PC-9 (cell line): ENCODE measurements at regions of chr4 and their contacts with region 1.

Region 1: GRCh38 chr4:118740869-118741268 is 55.7 kb downstream of the METTL14 start:
- DNase-seq: no peak
- H3K4me3 ChIP-seq: no peak overlapping the region
- H3K27ac ChIP-seq: no peak overlapping the region
- H3K4me1 ChIP-seq: no peaks in the 10 kb centered on the region
- H3K27me3 ChIP-seq: no peaks in the 10 kb centered on the region
- CTCF ChIP-seq: peak; percentile 63

Region 2: GRCh38 chr4:118765399-118765798 is 24.5 kb after region 1 on chr4:
- CTCF ChIA-PET with region 1: interaction called, 14 read pairs
- POLR2A ChIA-PET with region 1: no interaction called
- intact Hi-C with region 1: no loop called
- DNase-seq: peak in 1 of 2 experiments; percentile 52
- H3K4me3 ChIP-seq: no peak overlapping the region
- H3K27ac ChIP-seq: 0 out of 2 replicates have a peak overlapping the region, but pooled peaks have one; percentile 1
- H3K4me1 ChIP-seq: 0 out of 2 replicates have a peak, but pooled peaks cover 4% of the 10 kb centered on the region
- H3K27me3 ChIP-seq: no peaks in the 10 kb centered on the region
- CTCF ChIP-seq: no peak

Region 3: DNA sequence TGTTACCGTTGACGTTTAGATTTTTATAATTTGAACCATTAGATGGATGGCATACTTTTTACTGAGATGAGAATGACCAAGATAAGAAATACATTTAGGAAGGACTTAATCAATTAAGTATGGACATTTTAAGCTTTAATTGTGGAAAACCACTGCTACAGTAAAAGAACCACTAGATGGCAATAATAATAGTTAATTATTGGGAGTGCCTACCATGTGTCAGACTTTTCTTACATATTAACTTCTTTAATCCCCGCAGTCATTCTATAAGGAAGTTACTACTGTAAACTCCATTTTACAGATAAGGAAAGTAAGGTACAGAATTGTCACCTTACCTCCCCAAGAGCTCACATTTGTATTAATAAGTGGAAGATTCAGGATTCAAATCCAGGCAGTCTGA is 346.3 kb after region 1 on chr4:
- CTCF ChIA-PET with region 1: no interaction called
- POLR2A ChIA-PET with region 1: no interaction called
- intact Hi-C with region 1: no loop called
- DNase-seq: no peak
- H3K4me3 ChIP-seq: no peak overlapping the region
- H3K27ac ChIP-seq: no peak overlapping the region
- H3K4me1 ChIP-seq: no peaks in the 10 kb centered on the region
- H3K27me3 ChIP-seq: no peaks in the 10 kb centered on the region
- CTCF ChIP-seq: peak; percentile 21; the same call in 1 of the 2 replicates

Region 4: DNA sequence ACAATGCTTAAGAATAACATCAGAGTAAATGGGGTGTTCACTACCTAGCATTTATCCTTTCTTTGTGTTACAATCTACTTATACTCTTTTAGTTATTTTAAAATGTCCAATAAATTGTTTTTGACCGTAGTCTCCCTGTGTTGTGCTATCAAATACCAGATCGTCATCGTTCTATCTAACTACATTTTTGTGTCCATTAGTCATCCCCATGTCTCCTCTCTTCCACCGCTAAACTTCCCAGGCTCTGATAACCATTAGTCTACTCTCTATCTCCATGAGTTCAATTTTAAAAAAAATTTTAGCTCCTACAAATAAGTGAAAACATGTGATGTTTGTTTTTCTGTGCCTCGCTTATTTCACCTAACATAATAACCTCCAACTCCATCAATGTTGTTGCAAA is 1799.8 kb after region 1 on chr4:
- CTCF ChIA-PET with region 1: no interaction called
- POLR2A ChIA-PET with region 1: no interaction called
- intact Hi-C with region 1: no loop called
- DNase-seq: no peak
- H3K4me3 ChIP-seq: no peak overlapping the region
- H3K27ac ChIP-seq: no peak overlapping the region
- H3K4me1 ChIP-seq: no peaks in the 10 kb centered on the region
- H3K27me3 ChIP-seq: no peaks in the 10 kb centered on the region
- CTCF ChIP-seq: no peak